Activated T-helper 1 cell treated with anti-CD3 and anti-CD28 coated beads, Interleukin-12 subunit alpha, Interleukin-12 subunit beta, Interleukin-2, Interleukin-4 antibody, amounts not matched to agents 30 ng/mL and 10 ng/mL and 1 ng/mL, durations not matched to agents 14 hours and 24 hours and 36 hours (primary cell): ENCODE measurements at regions of chr5 and their contacts with region 1.

Region 1: GRCh38 chr5:176543428-176544173 is 5.5 kb upstream of the CDHR2 start:
- DNase-seq: peak; percentile 74
- H3K4me3 Mint-ChIP-seq: peak overlapping the region; percentile 95
- H3K27ac Mint-ChIP-seq: peak overlapping the region; percentile 95
- H3K4me1 Mint-ChIP-seq: peaks cover 51% of the 10 kb centered on the region
- H3K27me3 Mint-ChIP-seq: no peaks in the 10 kb centered on the region

Region 2: GRCh38 chr5:176573564-176574296 is 30.1 kb after region 1 on chr5:
- intact Hi-C with region 1: loop called (anchors 2 kb)
- DNase-seq: peak; percentile 58
- H3K4me3 Mint-ChIP-seq: no peak overlapping the region
- H3K27ac Mint-ChIP-seq: no peak overlapping the region
- H3K4me1 Mint-ChIP-seq: no peaks in the 10 kb centered on the region
- H3K27me3 Mint-ChIP-seq: peaks cover 5% of the 10 kb centered on the region

Region 3: DNA sequence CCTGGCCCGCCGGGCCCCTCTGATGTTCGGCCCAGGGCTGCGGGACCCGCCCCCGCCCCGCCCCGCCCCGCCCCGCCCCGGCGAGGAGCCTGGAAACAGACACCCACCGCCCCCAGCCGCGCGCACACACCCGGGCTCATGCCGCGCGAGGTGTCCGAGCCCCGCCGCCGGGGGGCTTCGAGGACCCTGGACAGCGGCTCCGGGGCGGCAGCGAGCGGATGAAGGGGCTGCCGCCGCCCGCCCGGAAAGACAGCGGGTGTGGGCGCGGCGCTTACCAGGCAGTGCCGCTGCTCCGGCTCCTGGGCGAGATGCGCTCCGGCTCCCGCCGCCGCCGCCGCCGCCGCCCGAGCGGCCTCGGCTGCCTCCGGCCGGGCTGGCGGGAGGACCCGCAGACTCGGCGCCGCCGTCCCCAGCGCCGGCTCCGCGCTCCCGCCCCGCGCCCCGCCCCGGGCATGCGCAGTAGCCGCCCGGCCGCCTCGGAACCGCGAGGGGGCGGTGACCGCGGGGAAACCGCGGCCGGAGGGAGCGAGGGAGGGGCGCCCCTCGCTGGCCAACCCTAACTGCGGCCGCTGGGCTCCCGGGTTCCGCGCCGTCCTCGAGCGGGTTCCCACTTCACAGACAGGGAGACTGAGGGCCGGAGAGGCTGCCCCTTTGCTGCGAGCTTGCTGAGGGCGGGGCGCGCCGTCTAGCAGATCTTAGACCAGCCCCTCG is 66.3 kb after region 1 on chr5 and contains the start of gene GPRIN1:
- intact Hi-C with region 1: loop called (anchors 1 kb)
- DNase-seq: peak; percentile 65
- H3K4me3 Mint-ChIP-seq: peak within 1 kb of the TSS; percentile 88
- H3K27ac Mint-ChIP-seq: peak within 1 kb of the TSS; percentile 76
- H3K4me1 Mint-ChIP-seq: peaks cover 20% of the 10 kb centered on the region
- H3K27me3 Mint-ChIP-seq: peaks cover 39% of the 10 kb centered on the region
- total RNA-seq, gene GPRIN1: 3.1 and 3.2 TPM in 2 replicates

Region 4: GRCh38 chr5:177086924-177087706 is 543.5 kb after region 1 on chr5:
- intact Hi-C with region 1: loop called (anchors 2 kb)
- DNase-seq: peak; percentile 48
- H3K4me3 Mint-ChIP-seq: no peak overlapping the region
- H3K27ac Mint-ChIP-seq: no peak overlapping the region
- H3K4me1 Mint-ChIP-seq: peaks cover 7% of the 10 kb centered on the region
- H3K27me3 Mint-ChIP-seq: peaks cover 45% of the 10 kb centered on the region